Ovary (tissue), 10 donors: ENCODE measurements at regions of chr4 and their contacts with region 1.

Region 1: DNA sequence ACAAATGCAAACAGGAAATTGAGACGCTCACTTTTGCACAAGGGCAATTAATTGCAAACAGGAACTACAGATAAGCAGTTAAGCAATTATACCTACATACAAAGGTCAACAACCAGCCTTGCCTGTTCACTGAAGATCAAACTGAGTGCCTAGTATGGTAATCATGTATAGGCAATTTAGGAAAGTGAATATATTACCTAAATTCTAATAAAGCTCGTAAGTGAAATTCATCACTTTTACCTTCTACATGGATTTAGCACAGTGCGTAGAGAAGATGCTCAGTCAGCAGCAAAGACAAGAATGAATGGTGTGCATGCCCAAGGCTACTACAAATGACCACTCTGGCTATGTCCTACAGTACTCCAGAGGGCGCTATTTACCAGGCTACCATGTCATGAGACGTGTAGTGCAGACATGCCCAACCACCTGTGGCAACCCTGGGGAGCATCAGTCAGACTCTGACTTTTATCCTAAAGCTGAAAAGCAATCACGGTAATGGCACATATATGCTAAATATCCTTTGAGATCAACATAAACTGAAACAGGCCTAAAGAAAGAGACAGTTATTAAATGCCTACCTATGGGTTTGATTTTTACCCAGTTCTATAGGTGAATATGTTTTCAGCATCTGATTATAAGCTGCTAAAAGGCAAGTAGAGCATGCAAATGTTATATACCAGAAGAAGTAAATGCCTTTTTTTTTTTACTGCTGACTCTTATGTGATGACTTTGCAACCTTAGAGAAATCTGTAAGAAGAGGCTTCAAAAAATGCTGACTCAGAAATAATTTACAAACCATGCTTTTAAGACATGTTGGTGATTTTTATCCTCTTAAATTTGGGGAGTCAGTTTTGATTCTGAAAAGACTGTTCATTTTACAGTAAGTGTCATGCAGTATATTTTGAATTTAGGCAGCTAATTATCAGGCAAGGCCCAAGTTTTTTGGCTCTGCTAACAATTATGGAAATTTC is 178.0 kb downstream of the PPP3CA start:
- DNase-seq: peak in 2 of 5 donors; percentile 35 to 52
- H3K4me3 ChIP-seq: no peak overlapping the region
- H3K27ac ChIP-seq: no peak overlapping the region
- H3K4me1 ChIP-seq: no peaks in the 10 kb centered on the region
- H3K27me3 ChIP-seq: no peaks in the 10 kb centered on the region
- CTCF ChIP-seq: peak; percentile 9 to 40 (median 26)
- EP300 ChIP-seq: no peak
- POLR2A ChIP-seq: no peak

Region 2: GRCh38 chr4:101527188-101527587 is 357.9 kb after region 1 on chr4:
- intact Hi-C with region 1: loop called in 1 of 4 experiments (anchors 5 kb)
- DNase-seq: no peak
- H3K4me3 ChIP-seq: no peak overlapping the region
- H3K27ac ChIP-seq: no peak overlapping the region
- H3K4me1 ChIP-seq: no peaks in the 10 kb centered on the region
- H3K27me3 ChIP-seq: no peaks in the 10 kb centered on the region
- CTCF ChIP-seq: no peak
- EP300 ChIP-seq: no peak
- POLR2A ChIP-seq: no peak